ENCODE measurements at regions of chr16 and their contacts with region 1.

Region 1: GRCh38 chr16:88737298-88738150 is 31.2 kb downstream of the CTU2 start:
- DNase-seq: peak; percentile 65 to 85
- ATAC-seq: peak; percentile 52 to 90
- H3K4me3 ChIP-seq: no peak overlapping the region
- H3K27ac ChIP-seq: peak overlapping the region in 1 of 2 experiments; percentile 59; a peak in 1 of 6 replicates
- H3K4me1 ChIP-seq: no peaks in the 10 kb centered on the region
- CTCF ChIP-seq: peak; percentile 98
- EP300 ChIP-seq: no peak
- POLR2A ChIP-seq: no peak
- RAD21 ChIP-seq: peak; percentile 51 to 67; a peak in 4 of 5 replicates

Region 2: GRCh38 chr16:88569985-88570690 is 167.4 kb before region 1 on chr16 and contains the start of gene ZC3H18:
- CTCF ChIA-PET with region 1: no interaction called
- POLR2A ChIA-PET with region 1: no interaction called
- DNase-seq: peak; percentile 95 to 96
- ATAC-seq: peak; percentile 87 to 93
- H3K4me3 ChIP-seq: peak within 1 kb of the TSS; percentile 80
- H3K27ac ChIP-seq: peak within 1 kb of the TSS; percentile 87 to 91
- H3K4me1 ChIP-seq: peaks cover 14% of the 10 kb centered on the region
- CTCF ChIP-seq: no peak
- EP300 ChIP-seq: no peak
- POLR2A ChIP-seq: peak; percentile 50
- RAD21 ChIP-seq: no peak
- polyA plus RNA-seq, gene ZC3H18: 13.1 and 21.1 TPM in 2 replicates

Region 3: GRCh38 chr16:88706288-88706964 is 31.1 kb before region 1 on chr16 and contains the starts of genes CTU2 and RNF166:
- CTCF ChIA-PET with region 1: interaction called, 49 read pairs
- POLR2A ChIA-PET with region 1: no interaction called
- DNase-seq: peak; percentile 85 to 91
- ATAC-seq: peak; percentile 71 to 81
- H3K4me3 ChIP-seq: peak within 1 kb of the TSS; percentile 75
- H3K27ac ChIP-seq: peak within 1 kb of the TSS; percentile 82 to 93
- H3K4me1 ChIP-seq: peaks cover 14% of the 10 kb centered on the region; the same call in 1 of the 3 replicates
- CTCF ChIP-seq: no peak
- EP300 ChIP-seq: no peak
- POLR2A ChIP-seq: peak; percentile 84
- RAD21 ChIP-seq: no peak
- polyA plus RNA-seq, gene CTU2: 12.9 and 16.4 TPM in 2 replicates
- polyA plus RNA-seq, gene RNF166: 7.9 and 9.4 TPM in 2 replicates

Region 4: DNA sequence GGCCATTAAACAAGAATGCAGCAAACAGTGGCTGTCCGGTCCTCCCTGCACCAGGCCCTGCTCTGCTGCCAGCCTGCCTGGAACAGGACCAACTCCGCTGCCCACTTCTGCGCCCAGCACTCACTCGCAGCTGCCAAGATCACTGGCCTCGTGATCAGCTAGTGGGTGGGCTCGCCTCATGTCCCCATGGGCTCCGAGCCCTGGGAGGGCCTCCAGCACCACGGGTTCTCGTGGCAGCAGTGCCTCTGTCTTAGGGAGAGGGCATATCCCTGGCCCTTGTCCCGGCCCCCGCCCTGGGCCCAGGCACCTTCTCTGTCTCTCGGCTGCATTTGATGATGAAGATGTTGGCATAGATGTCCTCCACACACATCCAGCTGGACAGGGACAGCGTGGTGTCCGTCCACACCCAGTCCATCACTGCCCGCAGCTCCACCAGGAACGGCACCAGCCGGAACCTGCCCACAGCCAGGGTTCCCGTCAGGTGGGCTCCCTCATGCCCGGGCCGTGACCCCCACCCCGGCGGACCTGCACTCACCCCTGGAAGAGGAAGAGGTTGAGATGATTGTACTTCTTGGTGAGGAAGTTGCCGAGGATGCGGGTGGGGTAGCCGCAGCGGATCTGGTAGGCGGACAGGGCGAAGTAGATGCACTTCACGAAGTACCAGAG is 18.1 kb before region 1 on chr16:
- CTCF ChIA-PET with region 1: interaction called, 105 read pairs
- POLR2A ChIA-PET with region 1: no interaction called
- DNase-seq: no peak
- ATAC-seq: no peak
- H3K4me3 ChIP-seq: no peak overlapping the region
- H3K27ac ChIP-seq: no peak overlapping the region
- H3K4me1 ChIP-seq: no peaks in the 10 kb centered on the region
- CTCF ChIP-seq: no peak
- EP300 ChIP-seq: no peak
- POLR2A ChIP-seq: no peak
- RAD21 ChIP-seq: no peak

Region 5: GRCh38 chr16:88779406-88780141 is 42.0 kb after region 1 on chr16:
- CTCF ChIA-PET with region 1: no interaction called
- POLR2A ChIA-PET with region 1: no interaction called
- DNase-seq: no peak
- ATAC-seq: no peak
- H3K4me3 ChIP-seq: no peak overlapping the region
- H3K27ac ChIP-seq: peak overlapping the region in 1 of 2 experiments; percentile 71; a peak in 3 of 6 replicates
- H3K4me1 ChIP-seq: peaks cover 44% of the 10 kb centered on the region
- CTCF ChIP-seq: no peak
- EP300 ChIP-seq: no peak
- POLR2A ChIP-seq: no peak
- RAD21 ChIP-seq: no peak

Region 6: DNA sequence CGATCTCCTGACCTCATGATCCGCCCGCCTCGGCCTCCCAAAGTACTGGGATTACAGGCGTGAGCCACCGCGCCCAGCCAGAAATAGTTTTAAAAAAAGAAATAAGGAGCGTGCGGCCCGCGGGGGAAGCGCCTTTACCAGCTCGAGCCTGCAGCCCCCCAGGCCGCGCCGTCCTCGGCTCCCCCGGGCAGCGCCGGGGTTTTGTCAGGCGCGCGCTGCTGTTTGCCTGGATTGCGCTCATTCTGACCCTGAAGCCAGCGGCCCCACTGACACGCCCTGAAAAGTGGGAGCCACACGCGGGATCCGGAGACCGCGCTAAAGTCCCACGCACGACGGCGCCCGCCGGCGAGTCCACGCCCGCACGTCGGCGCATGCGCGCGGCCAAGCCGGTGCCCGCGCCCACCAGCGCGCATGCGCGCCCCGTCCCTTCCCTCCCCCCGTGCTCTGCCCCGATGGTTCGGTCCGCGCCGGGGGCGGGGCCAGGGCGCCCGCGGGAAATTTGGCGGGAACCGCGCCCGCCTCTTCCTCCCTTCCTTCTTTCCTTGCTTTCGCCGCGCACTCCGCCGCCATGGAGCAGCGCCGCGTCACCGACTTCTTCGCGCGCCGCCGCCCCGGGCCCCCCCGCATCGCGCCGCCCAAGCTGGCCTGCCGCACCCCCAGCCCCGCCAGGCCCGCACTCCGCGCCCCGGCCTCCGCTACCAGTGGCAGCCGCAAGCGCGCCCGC is 65.9 kb after region 1 on chr16 and contains the start of gene CDT1:
- CTCF ChIA-PET with region 1: interaction called, 28 read pairs
- POLR2A ChIA-PET with region 1: no interaction called
- DNase-seq: peak; percentile 81 to 96
- ATAC-seq: peak; percentile 4 to 37; a peak in 4 of 6 replicates
- H3K4me3 ChIP-seq: peak within 1 kb of the TSS; percentile 73
- H3K27ac ChIP-seq: peak within 1 kb of the TSS; percentile 88 to 94
- H3K4me1 ChIP-seq: peaks cover 14% of the 10 kb centered on the region
- CTCF ChIP-seq: no peak
- EP300 ChIP-seq: no peak
- POLR2A ChIP-seq: peak; percentile 69
- RAD21 ChIP-seq: no peak
- polyA plus RNA-seq, gene CDT1: 3.4 and 3.8 TPM in 2 replicates

Region 7: GRCh38 chr16:89167425-89167941 is 430.0 kb after region 1 on chr16:
- CTCF ChIA-PET with region 1: interaction called, 29 read pairs
- POLR2A ChIA-PET with region 1: no interaction called
- DNase-seq: peak; percentile 77 to 83
- ATAC-seq: peak; percentile 44 to 74
- H3K4me3 ChIP-seq: no peak overlapping the region
- H3K27ac ChIP-seq: peak overlapping the region; percentile 71 to 80
- H3K4me1 ChIP-seq: peaks cover 21% of the 10 kb centered on the region
- CTCF ChIP-seq: peak; percentile 90
- EP300 ChIP-seq: no peak
- POLR2A ChIP-seq: no peak
- RAD21 ChIP-seq: peak; percentile 96 to 98

Measured in A549 (cell line).